WTC11 (cell line): ENCODE measurements at regions of chr12 and their contacts with region 1.

Region 1: GRCh38 chr12:109910969-109911348 is 10.9 kb downstream of the TCHP start:
- DNase-seq: peak; percentile 93
- ATAC-seq: peak; percentile 99
- H3K4me3 Mint-ChIP-seq: no peak overlapping the region
- H3K27ac Mint-ChIP-seq: no peak overlapping the region
- H3K4me1 Mint-ChIP-seq: peaks cover 16% of the 10 kb centered on the region
- H3K27me3 Mint-ChIP-seq: peaks cover 50% of the 10 kb centered on the region
- CTCF ChIP-seq: peak; percentile 47; the same call in 1 of the 2 replicates

Region 2: DNA sequence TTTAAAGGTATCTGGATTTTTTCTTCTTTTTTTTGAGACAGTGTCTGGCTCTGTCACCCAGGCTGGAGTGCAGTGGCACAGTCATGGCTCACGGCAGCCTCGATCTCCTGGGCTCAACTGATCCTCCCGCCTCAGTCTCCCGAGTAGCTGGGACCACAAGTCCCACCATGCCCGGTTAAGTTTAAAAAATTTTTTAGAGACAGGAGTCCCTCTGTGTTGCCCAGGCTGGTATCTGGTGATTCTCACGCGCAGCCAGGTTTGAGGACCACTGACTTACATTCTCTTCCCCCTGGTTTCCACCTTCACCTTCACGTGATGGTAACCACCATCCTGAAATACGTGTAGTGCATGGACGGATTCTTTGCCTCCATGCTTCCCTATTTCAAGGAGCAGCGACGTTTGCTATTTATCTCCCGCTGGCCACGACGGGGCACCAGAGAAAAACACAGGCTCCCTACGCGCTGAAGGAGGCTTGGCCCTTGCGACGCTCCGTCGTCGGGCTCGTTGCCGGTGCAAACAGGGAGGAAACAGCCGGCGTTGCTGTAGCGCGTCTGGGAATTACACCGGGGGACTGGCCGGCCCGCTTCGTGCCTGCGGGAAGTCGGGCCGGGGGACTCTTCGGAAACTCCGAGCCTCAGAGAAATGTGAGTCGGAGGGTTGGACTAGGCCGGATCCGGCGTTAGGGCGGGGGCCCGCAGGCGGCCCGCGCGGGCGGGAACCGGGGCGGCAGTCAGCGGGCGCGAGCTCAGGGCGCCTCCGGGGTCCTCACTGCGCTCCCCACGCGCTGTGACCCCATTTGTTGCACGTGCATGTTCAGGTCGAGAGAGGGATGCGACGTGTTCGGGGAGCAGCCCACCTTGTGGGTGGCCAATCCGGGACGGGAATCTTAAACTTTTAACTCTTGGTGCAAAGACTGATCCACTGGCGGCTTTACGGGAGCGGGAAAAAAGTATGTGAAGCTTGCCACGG is 10.9 kb before region 1 on chr12 and contains the start of gene TCHP:
- CTCF ChIA-PET with region 1: interaction called, 36 read pairs
- POLR2A ChIA-PET with region 1: interaction called, 4 read pairs
- DNase-seq: peak; percentile 74
- ATAC-seq: peak; percentile 49
- H3K4me3 Mint-ChIP-seq: peak within 1 kb of the TSS; percentile 85
- H3K27ac Mint-ChIP-seq: peak within 1 kb of the TSS; percentile 81
- H3K4me1 Mint-ChIP-seq: peaks cover 24% of the 10 kb centered on the region
- H3K27me3 Mint-ChIP-seq: peaks cover 99% of the 10 kb centered on the region
- CTCF ChIP-seq: no peak
- total RNA-seq, gene TCHP: 7.9 to 10.1 TPM (median 10.0 TPM) in 3 replicates